ENCODE measurements at regions of chr12 and their contacts with region 1.

Region 1: DNA sequence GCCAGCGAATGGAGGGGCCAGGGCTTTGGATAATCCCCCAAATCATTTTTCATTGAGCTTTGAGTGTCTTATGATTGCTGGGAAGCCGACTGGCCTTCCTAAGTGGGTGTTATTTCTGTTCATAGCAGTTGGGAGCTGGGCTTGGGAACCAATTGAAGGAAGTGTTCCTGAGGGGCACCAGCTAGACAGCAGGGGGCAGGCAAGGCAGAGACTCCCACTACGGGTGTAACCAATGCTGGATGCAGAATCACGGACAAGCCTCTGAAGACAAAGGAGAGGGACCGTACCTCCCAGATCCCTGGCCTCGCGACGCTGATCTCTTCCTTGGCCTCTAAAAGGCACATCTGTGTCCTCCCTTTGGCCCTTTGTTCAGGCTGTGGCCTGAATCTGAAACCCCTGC is 148.9 kb upstream of the PRMT8 start:
- DNase-seq: peak in 4 of 5 donors; percentile 65 to 76 (median 70)
- ATAC-seq: peak; percentile 79 to 91 (median 80)
- H3K4me3 ChIP-seq: no peak overlapping the region
- H3K27ac ChIP-seq: peak overlapping the region in 7 of 12 donors; percentile 12 to 63 (median 55)
- H3K4me1 ChIP-seq: peaks cover 0 to 24% (median 6%) of the 10 kb centered on the region in 12 donors
- H3K27me3 ChIP-seq: no peaks in the 10 kb centered on the region
- CTCF ChIP-seq: peak; percentile 35 to 78 (median 62)
- POLR2A ChIP-seq: no peak

Region 2: GRCh38 chr12:3491938-3492792 is 150.1 kb after region 1 on chr12:
- intact Hi-C with region 1: loop called in 1 of 10 experiments (anchors 10 kb)
- DNase-seq: peak in 4 of 5 donors; percentile 41 to 65 (median 52)
- ATAC-seq: peak; percentile 62 to 89 (median 84)
- H3K4me3 ChIP-seq: peak overlapping the region; percentile 22 to 51 (median 44)
- H3K27ac ChIP-seq: no peak overlapping the region
- H3K4me1 ChIP-seq: peaks cover 0 to 35% (median 7%) of the 10 kb centered on the region in 12 donors
- H3K27me3 ChIP-seq: peaks cover 22 to 77% (median 57%) of the 10 kb centered on the region in 9 donors
- CTCF ChIP-seq: peak in 1 of 12 donors; percentile 6
- POLR2A ChIP-seq: no peak

Region 3: DNA sequence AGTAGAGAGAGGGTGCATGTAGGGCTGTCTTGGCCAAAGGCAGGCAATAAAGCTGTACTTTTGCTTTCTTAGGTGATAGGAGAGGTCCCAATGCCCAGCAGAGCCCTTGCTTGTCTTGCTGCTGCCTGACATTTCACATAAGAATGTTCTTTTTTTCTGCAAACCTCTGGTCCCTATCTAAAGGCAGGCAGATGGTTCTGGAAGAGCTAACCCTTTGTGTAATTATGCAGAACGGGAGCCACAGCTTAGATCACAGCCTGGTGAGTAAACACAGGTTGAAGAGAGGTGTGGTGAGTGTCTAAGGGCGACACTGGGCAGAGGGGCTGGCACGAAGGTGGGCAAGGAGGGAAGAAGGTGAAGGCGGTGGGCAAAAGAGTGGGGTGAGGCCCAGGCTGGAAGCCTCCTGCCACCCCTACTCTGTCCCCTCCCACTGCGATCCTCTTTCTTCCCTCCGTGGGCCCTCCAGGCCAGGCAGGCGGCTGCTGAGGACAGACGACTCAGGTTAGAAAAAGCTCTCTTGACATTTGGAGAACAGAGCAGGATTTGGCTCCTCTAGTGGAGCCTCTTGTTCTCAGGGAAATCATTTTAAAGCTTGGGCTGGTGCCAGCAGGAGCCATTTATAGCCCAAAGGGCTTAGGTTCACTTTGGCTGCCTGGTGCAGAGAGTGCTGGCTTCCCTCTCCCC is 191.8 kb after region 1 on chr12:
- intact Hi-C with region 1: loop called in 1 of 10 experiments (anchors 10 kb)
- DNase-seq: peak in 4 of 5 donors; percentile 65 to 86 (median 73)
- ATAC-seq: peak; percentile 78 to 87 (median 84)
- H3K4me3 ChIP-seq: no peak overlapping the region
- H3K27ac ChIP-seq: peak overlapping the region in 11 of 12 donors; percentile 24 to 81 (median 69)
- H3K4me1 ChIP-seq: peaks cover 0 to 44% (median 5%) of the 10 kb centered on the region in 12 donors
- H3K27me3 ChIP-seq: peaks cover 0 to 4% (median 0%) of the 10 kb centered on the region in 9 donors
- CTCF ChIP-seq: peak in 7 of 12 donors; percentile 8 to 49 (median 32)
- POLR2A ChIP-seq: no peak

Region 4: DNA sequence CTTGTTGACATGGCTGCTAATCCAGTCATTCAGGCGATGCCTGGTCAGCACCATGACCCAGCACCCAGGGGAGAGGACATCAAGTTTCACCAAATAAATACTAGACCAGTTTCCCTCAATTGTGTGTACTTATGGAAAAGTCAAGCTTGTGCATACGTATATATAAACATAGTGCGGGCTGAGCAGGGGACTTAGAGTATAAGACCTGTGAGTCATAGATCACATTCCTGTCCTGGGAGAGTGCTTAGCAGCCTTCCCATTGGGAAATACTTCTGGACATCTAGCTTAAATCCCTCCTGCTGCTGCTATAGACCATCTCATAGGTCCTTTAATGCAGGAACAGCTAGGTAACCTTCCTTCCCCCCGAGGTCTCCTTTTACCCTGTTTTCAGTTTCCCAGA is 200.8 kb after region 1 on chr12:
- intact Hi-C with region 1: loop called in 2 of 10 experiments (anchors 10 kb)
- DNase-seq: no peak
- ATAC-seq: no peak
- H3K4me3 ChIP-seq: no peak overlapping the region
- H3K27ac ChIP-seq: no peak overlapping the region
- H3K4me1 ChIP-seq: peaks cover 0 to 13% (median 0%) of the 10 kb centered on the region in 12 donors
- H3K27me3 ChIP-seq: peaks cover 0 to 11% (median 0%) of the 10 kb centered on the region in 9 donors
- CTCF ChIP-seq: no peak
- POLR2A ChIP-seq: no peak

Region 5: DNA sequence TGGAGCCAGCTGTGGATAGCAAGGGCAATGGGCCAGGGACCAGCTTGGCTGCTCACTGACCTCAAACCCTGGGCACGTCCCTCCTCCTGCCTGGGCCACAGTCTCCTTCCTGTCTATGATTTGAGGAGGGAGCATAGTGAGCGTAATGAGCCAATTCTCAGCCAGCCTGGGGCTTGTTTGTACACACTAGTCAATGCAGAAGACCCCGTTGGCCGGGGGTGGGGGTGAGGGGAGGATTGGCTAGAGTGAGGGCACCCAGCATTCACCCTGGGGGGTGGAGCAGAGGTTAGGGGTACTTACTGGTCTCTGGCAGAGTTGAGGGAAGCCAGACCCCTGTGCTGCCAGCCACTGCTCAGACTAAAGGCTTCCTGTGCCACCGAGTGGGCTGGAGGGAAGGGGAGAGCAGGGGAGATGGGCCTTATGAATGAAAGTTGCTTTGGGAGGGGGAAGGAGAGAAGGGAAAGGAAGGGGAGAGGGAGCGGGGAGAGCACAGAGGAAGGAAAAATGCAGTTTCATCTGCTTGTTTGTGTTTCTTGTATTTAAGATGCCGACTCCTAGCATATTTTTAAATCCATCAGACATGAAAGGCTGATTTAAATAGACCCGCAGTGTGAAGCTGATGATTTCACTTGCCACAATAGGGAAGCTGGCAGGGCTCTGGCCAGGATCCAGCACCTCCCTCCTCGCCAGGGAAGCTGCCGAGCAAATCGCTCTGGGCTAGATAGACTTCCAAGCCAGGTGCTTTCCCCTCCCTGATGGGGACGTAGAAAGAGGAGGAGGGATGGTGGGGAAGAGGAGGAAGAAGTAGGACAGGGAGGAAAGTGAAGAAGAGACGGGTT is 262.9 kb after region 1 on chr12:
- intact Hi-C with region 1: loop called in 1 of 10 experiments (anchors 10 kb)
- DNase-seq: peak; percentile 76 to 86 (median 82)
- ATAC-seq: peak; percentile 59 to 85 (median 78)
- H3K4me3 ChIP-seq: no peak overlapping the region
- H3K27ac ChIP-seq: peak overlapping the region in 10 of 12 donors; percentile 22 to 88 (median 73)
- H3K4me1 ChIP-seq: peaks cover 0 to 54% (median 26%) of the 10 kb centered on the region in 12 donors
- H3K27me3 ChIP-seq: peaks cover 0 to 10% (median 0%) of the 10 kb centered on the region in 9 donors
- CTCF ChIP-seq: no peak
- POLR2A ChIP-seq: no peak